ENCODE measurements at regions of chr5 and their contacts with region 1.

Region 1: DNA sequence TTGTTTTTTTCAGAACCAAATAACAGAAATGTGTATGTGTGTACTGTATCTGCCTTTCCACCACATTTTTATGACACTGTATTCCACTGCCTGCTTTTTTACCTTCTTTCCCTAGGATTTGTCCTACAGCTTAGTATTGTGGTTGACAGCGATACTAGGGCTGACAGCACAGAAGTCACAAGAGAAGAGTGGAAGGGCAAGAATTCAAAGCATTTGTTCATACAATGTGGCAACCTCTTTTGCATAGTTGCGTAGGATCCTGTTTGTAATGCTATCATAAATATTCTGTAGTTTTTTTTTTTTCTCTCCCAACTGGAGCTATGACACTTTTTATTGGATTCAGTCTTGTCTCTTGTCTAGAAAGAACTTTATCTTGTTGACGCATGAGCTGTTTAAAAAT is 5.6 kb upstream of the BNIP1 start:
- DNase-seq: no peak
- H3K4me3 ChIP-seq: no peak overlapping the region
- H3K27ac ChIP-seq: no peak overlapping the region
- H3K4me1 ChIP-seq: peaks cover 5 to 12% (median 9%) of the 10 kb centered on the region in 4 experiments; a peak in 6 of 7 replicates
- H3K27me3 ChIP-seq: no peaks in the 10 kb centered on the region
- CTCF ChIP-seq: no peak
- EP300 ChIP-seq: no peak
- POLR2A ChIP-seq: no peak
- RAD21 ChIP-seq: no peak

Region 2: DNA sequence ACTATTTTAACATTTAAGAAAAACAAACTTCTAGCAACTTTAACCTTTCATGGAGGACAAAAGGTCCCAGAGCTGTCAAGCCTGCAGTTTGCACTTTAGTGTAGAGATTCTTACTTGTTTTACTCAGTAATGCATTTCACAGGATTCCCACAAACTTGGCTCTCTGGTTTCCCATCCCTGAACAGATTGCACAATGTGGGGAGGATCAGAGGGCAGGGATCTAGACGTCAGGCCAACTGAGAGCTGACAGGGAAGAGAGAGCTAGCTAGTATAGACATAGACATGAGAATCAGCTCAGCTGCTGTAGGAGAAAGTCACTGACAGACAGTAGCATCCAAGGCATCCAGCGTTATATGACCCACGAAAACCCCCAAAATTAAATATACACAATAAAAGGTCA is 15.3 kb before region 1 on chr5:
- CTCF ChIA-PET with region 1: interaction called, 5 read pairs
- POLR2A ChIA-PET with region 1: interaction called, 11 read pairs
- DNase-seq: no peak
- H3K4me3 ChIP-seq: no peak overlapping the region
- H3K27ac ChIP-seq: no peak overlapping the region
- H3K4me1 ChIP-seq: no peaks in the 10 kb centered on the region
- H3K27me3 ChIP-seq: no peaks in the 10 kb centered on the region
- CTCF ChIP-seq: no peak
- EP300 ChIP-seq: no peak
- POLR2A ChIP-seq: no peak
- RAD21 ChIP-seq: no peak